CD4-positive, alpha-beta memory T cell (primary cell): ENCODE measurements at regions of chr6 and their contacts with region 1.

Region 1: DNA sequence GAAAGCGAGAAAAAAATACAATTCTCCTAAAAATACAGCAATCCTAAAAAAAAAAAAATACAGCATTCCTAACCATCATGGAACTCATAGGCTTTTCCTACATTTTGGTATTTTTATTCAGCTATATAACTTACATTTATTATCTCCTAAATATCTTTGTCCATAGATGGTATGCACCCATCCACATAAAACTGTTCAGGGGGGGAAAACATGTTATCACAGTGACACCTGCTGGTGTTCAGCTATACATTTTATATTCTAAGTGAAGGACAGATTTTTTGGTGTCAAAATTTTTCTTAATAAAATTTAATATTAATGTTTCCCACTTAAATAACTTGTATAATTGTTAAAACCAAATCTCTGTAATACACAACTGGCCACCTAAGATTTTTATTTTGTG is 58.0 kb downstream of the BLOC1S5 start:
- DNase-seq: peak in 1 of 5 donors; percentile 5
- H3K4me3 ChIP-seq: no peak overlapping the region
- H3K4me3 Mint-ChIP-seq: no peak overlapping the region
- H3K27ac ChIP-seq: no peak overlapping the region
- H3K27ac Mint-ChIP-seq: no peak overlapping the region
- H3K4me1 ChIP-seq: no peaks in the 10 kb centered on the region
- H3K4me1 Mint-ChIP-seq: no peaks in the 10 kb centered on the region
- H3K27me3 ChIP-seq: no peaks in the 10 kb centered on the region
- H3K27me3 Mint-ChIP-seq: no peaks in the 10 kb centered on the region

Region 2: GRCh38 chr6:7691675-7692452 is 314.3 kb before region 1 on chr6:
- CTCF ChIA-PET with region 1: no interaction called
- POLR2A ChIA-PET with region 1: no interaction called
- intact Hi-C with region 1: no loop called
- DNase-seq: no peak
- H3K4me3 ChIP-seq: no peak overlapping the region
- H3K4me3 Mint-ChIP-seq: no peak overlapping the region
- H3K27ac ChIP-seq: no peak overlapping the region
- H3K27ac Mint-ChIP-seq: no peak overlapping the region
- H3K4me1 ChIP-seq: no peaks in the 10 kb centered on the region
- H3K4me1 Mint-ChIP-seq: no peaks in the 10 kb centered on the region
- H3K27me3 ChIP-seq: no peaks in the 10 kb centered on the region
- H3K27me3 Mint-ChIP-seq: peaks cover 8 to 17% of the 10 kb centered on the region in 2 donors

Region 3: GRCh38 chr6:7723041-7723447 is 283.2 kb before region 1 on chr6:
- CTCF ChIA-PET with region 1: no interaction called
- POLR2A ChIA-PET with region 1: no interaction called
- intact Hi-C with region 1: loop called (anchors 2 kb)
- DNase-seq: peak; percentile 27 to 52 (median 37)
- H3K4me3 ChIP-seq: no peak overlapping the region
- H3K4me3 Mint-ChIP-seq: no peak overlapping the region
- H3K27ac ChIP-seq: no peak overlapping the region
- H3K27ac Mint-ChIP-seq: no peak overlapping the region
- H3K4me1 ChIP-seq: peaks cover 12% of the 10 kb centered on the region
- H3K4me1 Mint-ChIP-seq: peaks cover 1 to 13% (median 11%) of the 10 kb centered on the region in 4 donors
- H3K27me3 ChIP-seq: peaks cover 20% of the 10 kb centered on the region
- H3K27me3 Mint-ChIP-seq: peaks cover 34 to 51% of the 10 kb centered on the region in 2 donors

Region 4: DNA sequence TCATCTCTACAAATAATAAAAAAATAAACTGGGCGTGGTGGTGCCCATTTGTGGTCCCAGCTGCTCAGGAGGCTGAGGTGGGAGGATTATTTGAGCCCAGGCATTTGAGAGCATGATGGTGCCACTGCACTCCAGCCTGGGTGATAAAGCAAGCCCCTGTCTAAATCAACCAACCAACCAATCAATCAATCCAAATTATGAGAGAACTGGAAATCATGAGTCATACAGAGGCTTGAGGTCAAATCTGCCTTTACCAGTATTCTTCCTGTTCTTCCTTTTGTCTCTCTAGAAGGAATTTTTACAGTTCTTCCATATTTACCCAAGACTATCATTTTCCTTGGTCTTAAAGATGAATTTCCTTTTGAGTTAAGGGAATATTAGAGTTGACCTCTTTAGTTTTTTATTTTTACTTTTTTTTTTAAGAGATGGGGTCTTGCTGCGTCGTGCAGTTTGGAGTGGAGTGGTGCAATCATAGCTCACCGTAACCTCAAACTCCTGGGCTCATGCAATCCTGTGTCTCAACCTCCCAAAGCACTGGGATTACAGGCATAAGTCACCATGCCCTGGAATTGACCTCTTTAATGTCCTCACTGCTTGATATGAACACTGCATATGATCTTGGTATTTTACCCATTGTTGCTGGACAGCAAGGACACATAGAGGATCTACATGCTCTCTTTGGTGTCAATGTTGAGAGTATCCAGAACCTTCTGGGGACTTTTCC is 51.6 kb before region 1 on chr6:
- CTCF ChIA-PET with region 1: no interaction called
- POLR2A ChIA-PET with region 1: no interaction called
- intact Hi-C with region 1: no loop called
- DNase-seq: no peak
- H3K4me3 ChIP-seq: no peak overlapping the region
- H3K4me3 Mint-ChIP-seq: no peak overlapping the region
- H3K27ac ChIP-seq: no peak overlapping the region
- H3K27ac Mint-ChIP-seq: no peak overlapping the region
- H3K4me1 ChIP-seq: no peaks in the 10 kb centered on the region
- H3K4me1 Mint-ChIP-seq: no peaks in the 10 kb centered on the region
- H3K27me3 ChIP-seq: no peaks in the 10 kb centered on the region
- H3K27me3 Mint-ChIP-seq: peaks cover 4 to 13% of the 10 kb centered on the region in 2 donors

Region 5: GRCh38 chr6:8025191-8025590 is 19.0 kb after region 1 on chr6:
- CTCF ChIA-PET with region 1: no interaction called
- POLR2A ChIA-PET with region 1: no interaction called
- intact Hi-C with region 1: no loop called
- DNase-seq: no peak
- H3K4me3 ChIP-seq: no peak overlapping the region
- H3K4me3 Mint-ChIP-seq: no peak overlapping the region
- H3K27ac ChIP-seq: no peak overlapping the region
- H3K27ac Mint-ChIP-seq: no peak overlapping the region
- H3K4me1 ChIP-seq: no peaks in the 10 kb centered on the region
- H3K4me1 Mint-ChIP-seq: peaks cover 7 to 13% (median 11%) of the 10 kb centered on the region in 4 donors
- H3K27me3 ChIP-seq: no peaks in the 10 kb centered on the region
- H3K27me3 Mint-ChIP-seq: no peaks in the 10 kb centered on the region